Natural killer cell (primary cell): ENCODE measurements at regions of chr12 and their contacts with region 1.

Region 1: DNA sequence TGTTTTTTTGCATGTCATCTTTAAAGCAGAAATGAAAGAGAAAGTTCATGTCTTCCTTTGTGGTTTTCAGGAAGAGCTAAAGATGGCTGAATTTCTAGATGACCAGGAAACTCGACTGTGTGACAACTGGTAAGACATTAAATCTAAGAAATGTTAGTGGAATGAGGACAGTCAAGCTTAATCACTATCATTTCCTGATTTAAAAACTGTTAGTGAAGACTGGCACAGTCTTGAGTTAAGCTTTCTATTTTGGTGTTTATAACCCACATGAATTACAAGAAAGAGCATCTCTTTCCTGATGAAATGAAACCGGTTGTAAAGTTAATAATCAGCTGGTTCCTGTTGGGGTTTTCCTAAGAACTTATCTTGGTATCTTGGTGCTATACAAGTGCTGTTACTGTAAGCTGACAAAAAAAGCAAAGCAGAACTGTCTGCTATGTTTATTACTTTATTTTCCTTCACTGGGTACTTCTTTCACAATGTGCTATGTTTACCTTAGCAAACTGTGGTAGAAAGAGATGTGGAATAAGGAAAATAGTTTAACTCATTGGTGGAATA is 5.2 kb downstream of the TRAFD1 start:
- DNase-seq: peak in 1 of 2 donors; percentile 80
- ATAC-seq: peak; percentile 64 to 84 (median 82)
- H3K4me3 ChIP-seq: peak overlapping the region; percentile 14
- H3K4me3 Mint-ChIP-seq: peak overlapping the region; percentile 76
- H3K27ac ChIP-seq: peak overlapping the region; percentile 77
- H3K27ac Mint-ChIP-seq: peak overlapping the region; percentile 91 to 96
- H3K4me1 ChIP-seq: peaks cover 33% of the 10 kb centered on the region
- H3K4me1 Mint-ChIP-seq: peaks cover 36 to 52% of the 10 kb centered on the region in 2 donors
- H3K27me3 ChIP-seq: no peaks in the 10 kb centered on the region
- H3K27me3 Mint-ChIP-seq: no peaks in the 10 kb centered on the region
- CTCF ChIP-seq: no peak

Region 2: GRCh38 chr12:112046003-112046402 is 84.5 kb before region 1 on chr12:
- intact Hi-C with region 1: no loop called
- DNase-seq: no peak
- ATAC-seq: no peak
- H3K4me3 ChIP-seq: no peak overlapping the region
- H3K4me3 Mint-ChIP-seq: no peak overlapping the region
- H3K27ac ChIP-seq: no peak overlapping the region
- H3K27ac Mint-ChIP-seq: no peak overlapping the region
- H3K4me1 ChIP-seq: no peaks in the 10 kb centered on the region
- H3K4me1 Mint-ChIP-seq: no peaks in the 10 kb centered on the region
- H3K27me3 ChIP-seq: no peaks in the 10 kb centered on the region
- H3K27me3 Mint-ChIP-seq: no peaks in the 10 kb centered on the region
- CTCF ChIP-seq: no peak

Region 3: DNA sequence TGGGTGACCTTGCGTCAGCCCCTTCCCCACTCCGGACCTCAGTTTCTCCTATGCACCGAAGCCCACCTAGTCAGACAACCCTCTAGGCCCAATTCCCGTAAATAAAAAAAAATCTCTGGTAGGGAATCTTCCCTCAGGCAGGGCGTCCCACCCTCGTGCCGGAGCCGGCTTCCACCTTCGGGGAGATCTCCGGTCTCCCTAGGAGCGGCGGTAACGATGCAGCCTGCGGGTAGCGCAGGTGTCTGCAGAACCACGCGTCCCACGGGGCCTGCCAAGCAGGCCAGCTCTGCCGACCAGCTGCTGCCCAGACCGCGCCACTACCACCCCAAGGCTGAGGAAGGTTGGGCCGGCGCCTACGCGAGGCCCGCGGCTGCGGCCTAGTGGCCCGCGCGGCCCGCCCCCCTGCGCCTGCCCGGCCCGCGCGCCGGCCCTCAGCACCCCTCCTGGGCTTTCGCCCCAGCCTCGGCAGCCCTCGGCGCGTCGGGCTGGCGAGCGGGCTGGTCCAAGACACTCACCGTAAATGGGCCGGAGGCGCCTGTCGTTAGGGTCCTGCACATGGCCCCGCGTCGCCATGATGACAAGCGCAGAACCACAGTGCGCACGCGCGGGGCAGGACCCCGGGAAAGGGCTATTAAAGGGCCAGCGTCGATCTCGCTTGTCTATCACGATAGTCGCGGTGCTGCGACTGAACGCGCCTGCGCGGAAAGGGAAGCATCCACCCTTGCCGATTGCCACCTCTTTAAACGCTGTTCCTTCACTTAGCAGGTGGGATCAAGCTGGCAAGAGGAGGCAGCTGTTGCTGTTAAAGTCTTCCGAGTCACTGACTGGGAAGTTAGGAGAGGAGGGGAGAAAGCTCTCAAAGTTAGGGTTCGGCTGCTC is 22.1 kb before region 1 on chr12 and contains the start of gene NAA25:
- intact Hi-C with region 1: loop called (anchors 1 kb)
- DNase-seq: peak; percentile 84 to 94
- ATAC-seq: peak; percentile 82 to 91 (median 87)
- H3K4me3 ChIP-seq: peak within 1 kb of the TSS; percentile 88
- H3K4me3 Mint-ChIP-seq: peak within 1 kb of the TSS; percentile 95
- H3K27ac ChIP-seq: peak within 1 kb of the TSS; percentile 80
- H3K27ac Mint-ChIP-seq: peak within 1 kb of the TSS; percentile 91 to 93
- H3K4me1 ChIP-seq: peaks cover 25% of the 10 kb centered on the region
- H3K4me1 Mint-ChIP-seq: peaks cover 33 to 34% of the 10 kb centered on the region in 2 donors
- H3K27me3 ChIP-seq: no peaks in the 10 kb centered on the region
- H3K27me3 Mint-ChIP-seq: no peaks in the 10 kb centered on the region
- CTCF ChIP-seq: no peak
- total RNA-seq, gene NAA25: 25.8 to 34.4 (median 30.7) TPM